ENCODE measurements at regions of chr2 and their contacts with region 1.

Region 1: DNA sequence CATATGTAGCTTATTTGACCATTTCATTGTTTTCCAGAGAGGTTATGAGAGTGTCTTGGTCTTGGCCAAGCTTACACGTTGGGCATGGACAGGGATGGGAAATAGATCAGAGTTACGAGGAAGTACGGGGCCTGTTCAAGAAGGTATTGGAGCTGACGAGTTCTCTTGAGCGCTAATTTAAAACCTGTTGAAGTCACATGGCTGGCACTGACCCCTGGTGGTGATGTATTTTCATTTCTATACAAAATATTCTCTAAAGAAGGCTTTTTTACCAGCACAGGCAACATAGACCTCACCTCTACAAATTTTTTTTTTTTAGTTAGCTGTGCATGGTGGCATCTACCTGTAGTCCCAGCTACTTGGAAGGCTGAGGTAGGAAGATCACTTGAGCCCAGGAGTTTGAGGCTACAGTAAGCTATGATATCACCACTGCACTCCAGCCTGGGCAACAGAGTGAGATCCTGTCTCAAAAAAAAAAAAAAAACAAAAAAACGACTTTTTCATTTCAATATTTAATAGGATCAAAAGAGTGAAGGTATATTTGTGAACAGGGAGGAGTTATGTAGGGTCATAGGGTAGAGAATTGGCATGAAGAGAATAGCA is 19.6 kb downstream of the UGP2 start:
- DNase-seq: peak; percentile 80

Region 2: GRCh38 chr2:63698825-63699548 is 162.3 kb before region 1 on chr2:
- in situ Hi-C with region 1: loop called (anchors 25 kb)
- DNase-seq: peak; percentile 51

Region 3: DNA sequence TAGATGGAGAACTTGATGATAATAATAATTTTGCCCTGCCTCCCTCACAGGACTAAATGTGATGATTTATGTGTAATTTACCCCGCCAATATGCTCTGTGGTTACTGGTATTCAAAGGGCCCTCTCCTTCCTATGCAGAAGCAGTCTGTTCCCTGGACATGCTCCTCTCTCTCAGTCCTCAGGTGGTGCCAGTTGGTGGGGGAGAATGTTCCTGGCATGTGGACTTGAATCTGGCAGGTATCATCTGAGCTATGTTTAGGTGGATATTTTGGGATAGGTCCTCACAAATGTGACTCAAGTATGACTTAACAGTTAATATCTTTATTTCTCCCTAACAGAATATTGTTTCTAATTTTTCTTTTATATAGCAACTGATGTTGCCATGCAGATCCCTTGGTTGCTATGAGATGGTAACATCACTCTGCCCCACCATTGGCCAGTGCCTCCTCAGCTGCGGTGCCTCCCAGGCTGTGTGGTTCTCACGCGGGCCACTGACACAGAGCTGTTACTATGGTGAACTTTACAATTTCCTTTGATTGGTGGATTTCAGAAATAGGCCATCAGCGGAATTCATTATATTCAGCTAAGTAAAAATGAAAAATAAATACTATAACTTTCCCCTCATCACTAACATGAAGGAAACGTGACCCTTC is 389.6 kb after region 1 on chr2:
- in situ Hi-C with region 1: no loop called
- DNase-seq: no peak

Region 4: GRCh38 chr2:64463781-64464180 is 602.5 kb after region 1 on chr2:
- in situ Hi-C with region 1: no loop called
- DNase-seq: no peak

Measured in KBM-7 (cell line).